ENCODE measurements at regions of chr9 and their contacts with region 1.

Region 1: DNA sequence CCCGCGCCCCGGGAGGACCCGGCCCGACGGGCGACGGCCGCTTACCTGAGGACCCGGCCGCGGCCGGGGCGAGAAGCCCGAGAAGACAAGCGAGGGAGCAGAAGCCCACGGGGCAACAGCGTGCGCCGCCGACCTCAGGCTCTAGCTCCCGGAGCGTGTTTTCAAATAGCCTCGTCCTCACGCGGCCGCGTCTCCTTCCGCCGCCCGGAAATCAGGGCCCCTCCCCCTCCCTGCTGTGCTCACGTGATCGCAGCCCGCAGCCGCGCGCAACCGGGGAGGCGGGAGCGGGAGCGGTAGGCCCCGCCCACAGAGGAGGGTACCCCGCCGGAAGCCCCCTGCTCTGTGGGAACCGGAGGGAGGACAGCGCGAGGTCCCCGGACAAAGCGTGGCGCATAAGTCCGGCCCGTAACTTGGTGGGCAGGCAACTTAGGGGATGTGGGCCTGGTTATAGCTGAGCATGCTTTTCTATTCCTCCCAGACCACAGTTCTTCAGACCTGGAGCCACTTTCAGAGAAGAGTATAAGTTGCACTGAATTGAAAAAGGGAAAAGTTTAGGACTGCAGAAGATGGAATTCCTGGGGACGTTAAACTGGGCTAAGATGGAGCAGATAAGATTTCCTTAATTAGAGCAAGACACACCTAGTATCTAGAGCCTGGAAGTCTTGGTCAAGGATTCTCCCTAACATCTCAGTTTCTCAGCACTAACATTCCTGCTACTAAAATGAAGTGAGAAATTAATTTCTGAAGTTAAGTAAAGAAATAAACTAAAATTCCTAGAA is at the start of gene TEX10:
- DNase-seq: peak; percentile 94
- total RNA-seq, gene TEX10: 7.6 TPM

Region 2: DNA sequence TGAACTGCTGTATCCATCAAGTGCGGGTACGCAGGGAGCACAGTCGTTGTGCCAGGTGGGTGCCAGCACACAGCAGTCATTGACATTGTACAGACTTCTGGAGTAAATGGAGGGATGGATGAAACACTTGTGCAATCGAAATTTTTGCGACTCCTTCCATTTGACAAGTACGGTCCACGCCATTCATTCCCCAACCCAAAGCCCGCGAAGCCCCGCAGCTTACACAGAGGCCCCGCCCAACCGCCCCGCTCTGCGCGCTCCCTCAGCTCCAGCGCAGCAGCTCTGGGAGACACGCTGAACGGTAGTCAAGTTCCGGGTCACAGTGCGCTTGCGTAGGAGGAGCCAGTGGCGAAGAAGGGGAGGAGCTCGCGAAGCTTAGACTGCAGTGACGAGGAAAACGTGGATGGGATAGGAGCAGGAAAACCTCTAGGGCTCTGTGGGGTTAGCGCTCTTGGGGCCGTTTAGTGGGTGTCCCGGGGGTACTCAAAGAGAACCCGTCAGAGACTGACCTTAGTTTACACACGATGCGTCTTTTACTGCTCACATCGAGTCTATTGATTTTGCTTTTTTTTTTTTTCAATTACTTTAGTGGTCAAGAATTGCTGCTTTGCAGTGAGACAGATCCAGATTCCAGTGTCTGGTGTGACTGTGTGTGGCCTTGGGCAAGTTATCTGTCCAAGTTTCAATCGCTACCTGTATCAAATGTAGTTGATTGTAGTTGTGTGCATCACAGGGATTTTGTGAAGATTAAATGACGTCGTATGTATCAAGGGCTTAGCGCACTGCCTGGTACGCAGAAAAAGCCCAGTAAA is 58.8 kb after region 1 on chr9:
- intact Hi-C with region 1: loop called (anchors 5 kb)
- DNase-seq: peak; percentile 95

Region 3: GRCh38 chr9:100426530-100427428 is 73.9 kb after region 1 on chr9 and contains the start of gene MSANTD3:
- intact Hi-C with region 1: loop called (anchors 5 kb)
- DNase-seq: peak; percentile 81
- total RNA-seq, gene MSANTD3: 32.3 TPM

Region 4: GRCh38 chr9:100472788-100473275 is 119.9 kb after region 1 on chr9 and contains the start of gene TMEFF1:
- intact Hi-C with region 1: no loop called
- DNase-seq: no peak
- total RNA-seq, gene TMEFF1: 0.46 TPM